MCF 10A (cell line): ENCODE measurements at regions of chr5 and their contacts with region 1.

Region 1: DNA sequence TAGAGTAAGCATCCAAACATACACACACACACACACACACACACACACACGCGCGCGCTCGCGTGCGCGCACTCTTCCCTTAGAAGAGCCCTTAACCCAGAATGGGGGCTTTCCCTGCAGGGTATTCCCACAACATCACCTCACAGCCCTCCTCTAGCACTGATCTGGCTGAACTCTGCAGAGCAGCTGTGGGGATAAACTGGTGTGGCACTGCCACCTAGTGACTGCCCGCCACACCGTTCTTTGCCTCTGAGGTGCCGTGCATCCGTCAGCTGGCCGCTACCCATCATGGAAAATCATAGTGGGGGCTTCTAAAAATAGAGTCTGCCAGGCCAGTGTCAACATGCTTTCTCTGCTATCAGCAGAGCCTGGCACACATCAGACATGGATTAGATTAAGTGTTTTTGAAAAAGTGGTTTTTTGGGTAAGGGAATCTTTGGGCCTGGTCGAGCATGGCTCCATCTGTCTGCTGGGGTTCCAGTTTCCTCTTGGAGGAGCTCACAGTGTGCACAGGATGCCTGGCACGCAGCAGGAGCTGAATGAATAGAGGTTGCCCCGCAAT is 88.1 kb downstream of the KCNN2 start:
- DNase-seq: peak; percentile 57
- H3K4me3 Mint-ChIP-seq: no peak overlapping the region
- H3K27ac Mint-ChIP-seq: no peak overlapping the region
- H3K4me1 Mint-ChIP-seq: no peaks in the 10 kb centered on the region
- H3K27me3 Mint-ChIP-seq: peaks cover 84% of the 10 kb centered on the region
- CTCF ChIP-seq: peak; percentile 85

Region 2: GRCh38 chr5:113612060-113612496 is 837.9 kb before region 1 on chr5:
- CTCF ChIA-PET with region 1: interaction called, 57 read pairs
- POLR2A ChIA-PET with region 1: no interaction called
- intact Hi-C with region 1: loop called (anchors 1 kb)
- DNase-seq: peak; percentile 49
- H3K4me3 Mint-ChIP-seq: no peak overlapping the region
- H3K27ac Mint-ChIP-seq: no peak overlapping the region
- H3K4me1 Mint-ChIP-seq: peaks cover 5% of the 10 kb centered on the region
- H3K27me3 Mint-ChIP-seq: peaks cover 21% of the 10 kb centered on the region
- CTCF ChIP-seq: peak; percentile 61

Region 3: GRCh38 chr5:113806250-113806649 is 643.7 kb before region 1 on chr5:
- CTCF ChIA-PET with region 1: interaction called, 5 read pairs
- POLR2A ChIA-PET with region 1: no interaction called
- intact Hi-C with region 1: loop called (anchors 2 kb)
- DNase-seq: peak; percentile 25
- H3K4me3 Mint-ChIP-seq: no peak overlapping the region
- H3K27ac Mint-ChIP-seq: no peak overlapping the region
- H3K4me1 Mint-ChIP-seq: peaks cover 9% of the 10 kb centered on the region
- H3K27me3 Mint-ChIP-seq: peaks cover 34% of the 10 kb centered on the region
- CTCF ChIP-seq: peak; percentile 13

Region 4: GRCh38 chr5:114438471-114438870 is 11.5 kb before region 1 on chr5:
- CTCF ChIA-PET with region 1: interaction called, 28 read pairs
- POLR2A ChIA-PET with region 1: no interaction called
- intact Hi-C with region 1: no loop called
- DNase-seq: no peak
- H3K4me3 Mint-ChIP-seq: no peak overlapping the region
- H3K27ac Mint-ChIP-seq: no peak overlapping the region
- H3K4me1 Mint-ChIP-seq: no peaks in the 10 kb centered on the region
- H3K27me3 Mint-ChIP-seq: peaks cover 52% of the 10 kb centered on the region
- CTCF ChIP-seq: no peak

Region 5: GRCh38 chr5:114789773-114790402 is 339.9 kb after region 1 on chr5:
- CTCF ChIA-PET with region 1: interaction called, 7 read pairs
- POLR2A ChIA-PET with region 1: no interaction called
- intact Hi-C with region 1: loop called (anchors 10 kb)
- DNase-seq: peak; percentile 47
- H3K4me3 Mint-ChIP-seq: no peak overlapping the region
- H3K27ac Mint-ChIP-seq: no peak overlapping the region
- H3K4me1 Mint-ChIP-seq: no peaks in the 10 kb centered on the region
- H3K27me3 Mint-ChIP-seq: peaks cover 49% of the 10 kb centered on the region
- CTCF ChIP-seq: peak; percentile 40

Region 6: DNA sequence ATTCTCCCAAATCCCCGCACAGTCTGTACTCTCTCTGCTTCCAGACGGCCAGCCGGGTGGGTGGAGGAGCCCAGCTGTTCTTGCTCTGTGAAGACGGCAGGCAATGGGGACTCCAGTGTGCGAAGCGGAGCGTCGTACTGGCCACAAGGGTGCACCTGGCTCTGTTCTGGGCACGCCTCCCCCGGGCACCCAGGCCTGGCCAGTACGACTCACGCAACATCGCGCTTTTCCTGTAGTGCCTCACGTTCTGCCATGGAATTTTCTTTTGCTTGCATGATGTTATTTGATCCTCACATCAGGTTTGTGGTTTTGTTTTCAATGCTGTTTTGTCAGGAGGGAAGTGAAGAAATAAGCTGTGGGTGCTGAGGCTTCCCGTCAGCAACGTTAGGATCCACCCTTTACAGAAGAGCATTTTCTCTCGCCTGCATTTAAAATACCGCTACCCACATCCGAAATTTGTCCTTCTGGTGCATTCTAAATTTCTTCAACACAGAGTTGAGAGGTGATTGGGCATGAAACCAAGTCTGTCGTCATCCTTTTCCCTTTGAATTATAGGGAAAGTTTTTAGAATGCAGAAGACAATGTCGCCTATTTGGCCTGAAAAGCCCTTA is 408.1 kb after region 1 on chr5:
- CTCF ChIA-PET with region 1: no interaction called
- POLR2A ChIA-PET with region 1: no interaction called
- intact Hi-C with region 1: no loop called
- DNase-seq: peak; percentile 57
- H3K4me3 Mint-ChIP-seq: no peak overlapping the region
- H3K27ac Mint-ChIP-seq: no peak overlapping the region
- H3K4me1 Mint-ChIP-seq: no peaks in the 10 kb centered on the region
- H3K27me3 Mint-ChIP-seq: no peaks in the 10 kb centered on the region
- CTCF ChIP-seq: no peak